ENCODE measurements at regions of chr10 and their contacts with region 1.

Region 1: DNA sequence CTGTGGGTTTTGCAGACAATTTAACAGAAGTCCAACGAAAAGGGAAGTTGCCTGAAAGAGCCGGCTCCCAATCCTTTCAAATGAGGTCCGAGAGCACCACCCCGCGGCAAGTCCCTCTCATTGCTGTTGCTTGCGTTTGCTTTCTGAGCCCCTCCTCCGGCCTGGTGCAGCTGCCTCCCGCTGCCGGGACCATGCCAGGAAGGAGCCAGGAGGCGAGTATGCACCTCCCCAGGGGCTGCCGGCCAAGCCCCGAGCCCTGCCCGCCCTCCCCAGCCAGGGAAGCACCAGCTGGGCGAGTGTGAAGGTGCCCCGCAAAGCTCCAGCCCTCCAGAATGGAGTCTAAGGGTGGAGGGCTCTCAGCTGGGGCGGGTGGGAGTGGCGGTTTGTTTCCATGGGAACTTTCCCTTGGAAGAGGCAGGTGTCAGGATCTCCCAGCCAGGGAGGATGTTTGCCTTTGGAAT is 25.8 kb upstream of the PPP2R2D start:
- DNase-seq: peak; percentile 74
- ATAC-seq: peak; percentile 80 to 88

Region 2: GRCh38 chr10:130190055-130190736 is 1684.8 kb before region 1 on chr10:
- intact Hi-C with region 1: loop called in 1 of 2 experiments (anchors 2 kb)
- DNase-seq: peak; percentile 90
- ATAC-seq: peak; percentile 93 to 95

Region 3: GRCh38 chr10:131453594-131454355 is 421.2 kb before region 1 on chr10:
- intact Hi-C with region 1: loop called in 1 of 2 experiments (anchors 5 kb)
- DNase-seq: peak; percentile 72
- ATAC-seq: peak; percentile 67 to 86

Region 4: DNA sequence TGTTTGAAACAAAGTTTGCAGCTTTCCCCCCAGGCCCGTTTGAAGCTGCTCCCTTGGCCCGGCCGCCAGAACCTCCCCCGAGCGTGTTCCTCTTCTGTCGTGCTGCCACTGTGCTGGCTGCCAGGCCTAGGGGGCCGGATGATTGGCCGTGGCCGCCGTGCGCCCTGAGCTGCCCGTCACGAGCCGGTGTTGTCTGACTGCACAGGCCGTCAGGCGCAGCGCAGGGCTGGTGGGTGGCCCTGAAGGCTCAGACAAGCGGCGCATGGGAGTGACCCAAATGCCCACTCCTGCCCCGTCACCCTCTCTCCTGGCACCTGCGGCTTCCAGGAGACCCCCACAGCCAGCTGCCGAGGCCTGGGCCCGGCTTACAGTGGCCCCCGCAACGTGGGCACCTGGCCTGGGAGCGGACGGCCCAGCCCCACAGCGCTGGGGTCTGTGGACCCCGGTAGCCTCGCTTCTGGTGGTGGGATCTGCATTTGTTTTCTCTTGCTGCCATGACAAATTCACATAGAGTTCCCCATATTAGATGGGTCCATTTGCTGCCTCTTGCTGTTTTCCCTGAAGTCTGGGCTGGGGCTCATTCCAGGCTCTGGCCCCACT is 203.8 kb after region 1 on chr10:
- intact Hi-C with region 1: no loop called
- DNase-seq: no peak
- ATAC-seq: peak; percentile 38 to 60